SK-N-SH (cell line): ENCODE measurements at regions of chr4 and their contacts with region 1.

Region 1: DNA sequence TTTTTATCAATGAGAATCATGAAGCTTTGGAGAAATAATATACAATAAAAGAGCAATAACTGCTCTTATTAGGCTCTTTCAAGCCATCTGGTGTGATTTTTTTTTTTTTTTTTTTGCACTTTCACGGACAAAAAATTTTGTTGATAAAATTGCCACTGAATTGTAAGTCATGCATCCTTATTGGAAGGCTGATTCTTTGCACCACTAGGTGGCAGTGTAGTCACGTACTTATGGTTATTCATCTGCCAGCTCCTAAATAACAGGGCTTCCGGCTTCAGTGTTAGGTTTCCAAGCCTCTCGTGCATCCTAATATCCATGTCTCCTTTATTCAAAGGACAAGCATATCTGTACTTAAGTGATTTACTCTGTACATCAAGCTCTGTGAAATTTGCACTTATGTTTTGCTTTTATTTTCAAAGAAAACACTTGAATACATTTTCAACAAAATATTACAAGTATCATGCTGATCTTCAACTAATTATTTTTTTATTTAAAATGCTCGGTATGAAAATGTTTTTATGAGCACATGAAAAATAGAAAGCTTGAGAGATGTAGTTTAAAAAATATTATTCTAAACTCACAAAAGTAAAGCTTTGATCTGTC is 1578.3 kb upstream of the TENM3 start:
- DNase-seq: peak; percentile 59
- H3K4me3 ChIP-seq: peak overlapping the region in 1 of 2 experiments; percentile 5; a peak in 1 of 4 replicates
- H3K27ac ChIP-seq: no peak overlapping the region
- H3K4me1 ChIP-seq: no peaks in the 10 kb centered on the region; a peak in 2 of 4 replicates
- H3K27me3 ChIP-seq: no peaks in the 10 kb centered on the region
- CTCF ChIP-seq: peak; percentile 86
- EP300 ChIP-seq: no peak
- RAD21 ChIP-seq: peak; percentile 86

Region 2: GRCh38 chr4:180449395-180449956 is 215.4 kb before region 1 on chr4:
- CTCF ChIA-PET with region 1: interaction called, 10 read pairs
- POLR2A ChIA-PET with region 1: no interaction called
- DNase-seq: peak; percentile 53
- H3K4me3 ChIP-seq: peak overlapping the region; percentile 37 to 46
- H3K27ac ChIP-seq: no peak overlapping the region
- H3K4me1 ChIP-seq: no peaks in the 10 kb centered on the region
- H3K27me3 ChIP-seq: no peaks in the 10 kb centered on the region; the same call in 1 of the 2 replicates
- CTCF ChIP-seq: peak; percentile 76
- EP300 ChIP-seq: no peak
- RAD21 ChIP-seq: peak; percentile 74

Region 3: DNA sequence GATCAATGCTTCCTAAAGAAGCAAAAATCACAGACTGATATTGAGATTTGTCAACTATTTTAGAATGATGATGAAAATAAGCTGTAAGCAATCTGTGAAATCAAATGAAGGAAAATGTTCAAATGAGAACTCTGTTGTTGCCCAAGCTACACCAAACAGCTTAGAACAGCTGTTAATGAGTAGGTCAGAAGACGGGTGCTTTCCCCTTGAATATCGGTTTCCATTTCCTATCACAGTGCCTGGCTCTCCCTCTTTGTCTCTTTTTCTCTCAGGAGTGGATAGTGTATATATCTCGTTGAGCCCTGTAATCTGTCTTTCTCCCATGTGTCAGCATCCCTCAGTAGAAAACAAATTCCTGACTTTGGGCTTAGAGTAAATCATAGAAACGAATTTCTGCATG is 14.6 kb before region 1 on chr4:
- CTCF ChIA-PET with region 1: interaction called, 51 read pairs
- POLR2A ChIA-PET with region 1: no interaction called
- DNase-seq: no peak
- H3K4me3 ChIP-seq: no peak overlapping the region
- H3K27ac ChIP-seq: no peak overlapping the region
- H3K4me1 ChIP-seq: no peaks in the 10 kb centered on the region
- H3K27me3 ChIP-seq: no peaks in the 10 kb centered on the region
- CTCF ChIP-seq: no peak
- EP300 ChIP-seq: no peak
- RAD21 ChIP-seq: no peak

Region 4: GRCh38 chr4:180675359-180675650 is 10.4 kb after region 1 on chr4:
- CTCF ChIA-PET with region 1: interaction called, 24 read pairs
- POLR2A ChIA-PET with region 1: no interaction called
- DNase-seq: no peak
- H3K4me3 ChIP-seq: no peak overlapping the region
- H3K27ac ChIP-seq: no peak overlapping the region
- H3K4me1 ChIP-seq: no peaks in the 10 kb centered on the region
- H3K27me3 ChIP-seq: no peaks in the 10 kb centered on the region
- CTCF ChIP-seq: no peak
- EP300 ChIP-seq: no peak
- RAD21 ChIP-seq: no peak

Region 5: DNA sequence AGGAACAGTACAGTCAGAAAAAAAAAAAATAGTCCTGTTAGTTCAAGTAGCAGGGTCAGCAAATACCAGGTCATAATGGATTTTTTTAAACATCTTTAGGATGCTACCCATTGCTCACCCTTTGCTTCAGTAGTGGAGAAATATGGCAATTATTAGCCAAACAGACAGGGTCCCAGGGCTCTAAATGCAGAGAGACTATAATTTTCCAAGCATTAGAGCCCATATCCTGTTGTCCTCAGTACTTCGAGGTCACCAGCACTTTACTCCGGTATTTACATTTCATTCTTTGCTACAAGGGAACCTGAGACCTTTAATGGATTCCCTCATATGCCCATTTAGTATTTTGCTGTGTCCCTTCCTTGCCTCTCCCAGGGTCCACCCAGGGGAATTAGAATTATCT is 15.4 kb after region 1 on chr4:
- CTCF ChIA-PET with region 1: interaction called, 24 read pairs
- POLR2A ChIA-PET with region 1: no interaction called
- DNase-seq: no peak
- H3K4me3 ChIP-seq: no peak overlapping the region
- H3K27ac ChIP-seq: no peak overlapping the region
- H3K4me1 ChIP-seq: peaks cover 0 to 3% of the 10 kb centered on the region in 2 experiments; a peak in 1 of 4 replicates
- H3K27me3 ChIP-seq: no peaks in the 10 kb centered on the region
- CTCF ChIP-seq: no peak
- EP300 ChIP-seq: no peak
- RAD21 ChIP-seq: no peak

Region 6: DNA sequence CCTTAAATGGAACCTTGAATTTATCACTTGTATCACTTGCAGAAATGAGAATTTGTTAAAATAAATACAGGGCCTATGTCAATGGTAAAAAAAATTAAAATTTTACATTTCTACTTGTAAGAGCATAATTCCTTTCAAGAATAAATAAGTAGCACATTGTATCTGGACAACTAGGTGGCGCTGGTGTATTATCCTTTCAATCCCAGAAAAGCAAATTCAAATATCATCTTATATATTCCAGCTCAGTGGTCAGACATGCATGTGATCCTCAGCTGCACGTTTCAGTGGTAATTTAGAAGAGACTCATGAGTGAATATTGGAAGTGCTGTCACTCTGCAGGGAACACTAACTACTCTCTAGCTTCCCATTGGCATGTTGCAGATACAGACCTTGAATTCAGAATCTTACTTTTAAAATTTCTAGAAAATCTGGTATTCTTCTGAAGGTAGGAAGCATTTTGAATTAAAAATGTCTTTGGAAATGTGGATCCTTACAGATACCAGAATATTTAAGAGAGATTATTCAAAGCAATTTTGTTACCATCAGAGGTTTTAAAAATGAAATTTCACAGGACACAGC is 163.7 kb after region 1 on chr4:
- CTCF ChIA-PET with region 1: interaction called, 18 read pairs
- POLR2A ChIA-PET with region 1: no interaction called
- DNase-seq: peak; percentile 51
- H3K4me3 ChIP-seq: no peak overlapping the region
- H3K27ac ChIP-seq: no peak overlapping the region
- H3K4me1 ChIP-seq: peaks cover 0 to 8% of the 10 kb centered on the region in 2 experiments; a peak in 1 of 4 replicates
- H3K27me3 ChIP-seq: no peaks in the 10 kb centered on the region
- CTCF ChIP-seq: peak; percentile 82
- EP300 ChIP-seq: no peak
- RAD21 ChIP-seq: peak; percentile 93

Region 7: GRCh38 chr4:180850318-180850940 is 185.6 kb after region 1 on chr4:
- CTCF ChIA-PET with region 1: no interaction called
- POLR2A ChIA-PET with region 1: no interaction called
- DNase-seq: peak; percentile 11
- H3K4me3 ChIP-seq: no peak overlapping the region
- H3K27ac ChIP-seq: no peak overlapping the region
- H3K4me1 ChIP-seq: peaks cover 0 to 3% of the 10 kb centered on the region in 2 experiments; a peak in 2 of 4 replicates
- H3K27me3 ChIP-seq: no peaks in the 10 kb centered on the region
- CTCF ChIP-seq: no peak
- EP300 ChIP-seq: no peak
- RAD21 ChIP-seq: no peak

Region 8: GRCh38 chr4:181528570-181529184 is 863.8 kb after region 1 on chr4:
- CTCF ChIA-PET with region 1: interaction called, 14 read pairs
- POLR2A ChIA-PET with region 1: no interaction called
- DNase-seq: peak; percentile 55
- H3K4me3 ChIP-seq: peak overlapping the region in 1 of 2 experiments; percentile 30; a peak in 1 of 4 replicates
- H3K27ac ChIP-seq: no peak overlapping the region
- H3K4me1 ChIP-seq: peaks cover 0 to 5% of the 10 kb centered on the region in 2 experiments; a peak in 2 of 4 replicates
- H3K27me3 ChIP-seq: no peaks in the 10 kb centered on the region; the same call in 1 of the 2 replicates
- CTCF ChIP-seq: peak; percentile 86
- EP300 ChIP-seq: no peak
- RAD21 ChIP-seq: peak; percentile 97